AG04449 (cell line): ENCODE measurements at regions of chr16 and their contacts with region 1.

Region 1: GRCh38 chr16:30534368-30535105 is at the start of gene ZNF747:
- DNase-seq: no peak
- H3K4me3 ChIP-seq: peak within 1 kb of the TSS; percentile 70
- CTCF ChIP-seq: no peak

Region 2: DNA sequence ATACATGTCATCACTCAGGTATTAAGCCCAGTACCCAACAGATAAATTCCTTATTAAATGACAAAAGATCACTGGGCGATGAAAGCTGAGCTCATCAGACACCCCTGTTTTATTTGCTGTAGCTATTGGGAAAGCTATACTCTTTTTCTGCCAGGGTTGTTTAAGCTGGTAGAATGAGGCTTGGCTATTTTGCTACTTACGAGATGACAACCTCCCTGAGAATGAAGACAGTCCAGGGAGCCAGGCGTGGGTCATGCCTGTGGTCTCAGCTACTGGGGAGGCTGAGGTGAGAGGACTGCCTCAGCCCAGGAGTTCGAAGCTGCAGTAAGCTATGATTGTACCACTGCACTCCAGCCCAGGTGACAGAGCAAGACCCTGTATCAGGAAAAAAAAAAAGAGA is 1675.2 kb before region 1 on chr16:
- CTCF ChIA-PET with region 1: no interaction called
- POLR2A ChIA-PET with region 1: no interaction called
- DNase-seq: no peak
- H3K4me3 ChIP-seq: no peak overlapping the region
- CTCF ChIP-seq: no peak

Region 3: GRCh38 chr16:30429678-30430427 is 104.7 kb before region 1 on chr16 and contains the start of gene DCTPP1:
- CTCF ChIA-PET with region 1: interaction called, 20 read pairs
- POLR2A ChIA-PET with region 1: no interaction called
- DNase-seq: peak; percentile 91
- H3K4me3 ChIP-seq: peak within 1 kb of the TSS; percentile 94
- CTCF ChIP-seq: peak; percentile 71

Region 4: DNA sequence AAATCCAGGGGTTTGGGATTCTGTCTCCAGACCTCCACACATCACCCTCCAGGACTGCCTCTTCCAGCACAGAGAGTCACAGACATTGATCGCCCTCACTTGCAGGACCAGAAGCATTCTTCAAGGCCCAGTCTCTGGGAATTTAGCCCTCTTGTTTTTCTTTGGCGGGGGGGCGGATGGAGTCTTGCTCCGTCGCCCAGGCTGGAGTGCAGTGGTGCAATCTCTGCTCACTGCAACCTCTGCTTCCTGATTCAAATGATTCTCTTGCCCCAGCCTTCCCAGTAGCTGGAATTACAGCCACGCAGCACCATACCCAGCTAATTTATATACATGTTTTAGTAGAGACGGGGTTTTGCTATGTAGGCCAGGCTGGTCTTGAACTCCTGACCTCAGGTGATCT is 70.5 kb before region 1 on chr16:
- CTCF ChIA-PET with region 1: no interaction called
- POLR2A ChIA-PET with region 1: no interaction called
- DNase-seq: no peak
- H3K4me3 ChIP-seq: no peak overlapping the region
- CTCF ChIP-seq: no peak

Region 5: DNA sequence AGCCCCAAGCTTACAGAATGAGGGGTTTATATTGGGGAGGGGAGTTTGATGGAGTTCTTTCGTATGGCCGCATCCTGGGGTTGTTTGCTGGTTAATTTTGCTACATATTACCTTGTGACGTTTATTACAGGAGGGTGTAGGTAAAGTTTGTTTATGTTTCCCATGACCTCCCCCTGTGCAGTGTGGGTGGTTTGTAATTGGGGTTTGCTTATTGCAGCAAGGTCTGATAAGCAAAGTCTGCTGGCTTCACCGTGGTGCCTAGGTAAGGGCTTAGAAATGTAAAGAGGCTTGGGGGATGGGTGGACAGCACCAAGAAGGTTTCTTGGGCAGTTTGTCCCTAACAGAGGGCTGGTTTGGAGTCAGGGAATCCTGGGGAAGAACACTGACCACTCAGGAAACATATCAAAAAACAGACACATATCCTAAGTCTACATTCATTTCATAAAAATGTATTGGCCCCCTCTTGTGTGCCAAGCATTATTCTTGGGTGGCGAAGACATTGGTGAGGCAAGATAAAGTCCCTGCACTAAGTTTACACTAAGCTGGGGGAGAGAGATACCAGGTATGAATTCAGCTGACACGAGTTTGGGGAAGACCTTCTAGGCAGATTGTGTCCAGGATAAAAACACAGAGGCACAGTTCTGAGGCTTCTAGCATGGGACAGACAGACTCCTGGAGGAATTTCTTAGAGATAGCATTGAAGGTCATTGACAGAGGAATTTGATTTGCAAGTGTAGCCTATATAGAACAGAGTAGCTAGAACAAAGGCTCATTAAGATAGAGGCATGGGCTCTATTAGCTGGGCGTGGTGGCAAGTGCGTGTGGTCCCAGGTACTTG is 14.1 kb after region 1 on chr16:
- CTCF ChIA-PET with region 1: interaction called, 17 read pairs
- POLR2A ChIA-PET with region 1: no interaction called
- DNase-seq: no peak
- H3K4me3 ChIP-seq: no peak overlapping the region
- CTCF ChIP-seq: no peak

Region 6: DNA sequence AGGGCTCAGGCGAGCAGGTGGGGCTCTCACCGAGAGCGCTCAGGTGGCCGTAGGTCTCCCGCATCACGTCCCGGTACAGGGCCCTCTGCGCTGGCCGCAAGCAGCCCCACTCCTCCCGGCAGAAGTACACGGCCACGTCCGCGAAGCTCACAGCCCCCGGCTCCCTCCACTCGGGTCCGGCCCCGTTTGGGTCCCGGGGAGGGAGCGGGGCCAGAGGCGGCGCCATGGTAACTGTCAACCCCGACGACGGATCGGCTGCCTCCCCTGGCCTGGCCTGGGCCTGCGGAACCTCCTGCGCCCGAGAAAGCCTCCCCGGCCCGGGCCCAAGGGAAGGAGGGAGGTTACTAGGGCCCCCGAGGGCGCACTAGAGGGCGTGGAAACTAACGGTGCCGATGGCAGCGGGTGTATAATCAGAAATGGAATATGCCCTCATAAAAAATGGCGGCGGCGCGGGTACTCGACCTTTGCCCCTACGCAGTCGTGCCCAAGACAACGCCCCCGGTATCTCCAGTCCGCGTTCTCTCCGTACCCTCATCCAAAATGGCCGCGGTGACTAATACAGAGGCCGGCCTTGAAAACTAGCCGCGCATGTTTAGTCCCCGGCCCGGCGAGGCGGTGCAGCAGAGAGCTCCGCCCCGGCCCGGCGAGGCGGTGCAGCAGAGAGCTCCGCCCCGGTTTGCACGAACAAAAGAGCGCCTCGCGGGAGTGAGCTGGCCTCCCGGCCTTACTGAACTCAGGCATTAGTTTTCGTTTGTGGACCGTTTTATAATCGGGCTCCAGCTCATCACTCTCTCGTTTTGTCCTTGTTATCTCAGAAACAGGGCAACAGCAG is 23.6 kb after region 1 on chr16 and contains the start of gene ZNF764:
- CTCF ChIA-PET with region 1: interaction called, 27 read pairs
- POLR2A ChIA-PET with region 1: interaction called, 6 read pairs
- DNase-seq: peak; percentile 71
- H3K4me3 ChIP-seq: peak within 1 kb of the TSS; percentile 76
- CTCF ChIP-seq: no peak

Region 7: DNA sequence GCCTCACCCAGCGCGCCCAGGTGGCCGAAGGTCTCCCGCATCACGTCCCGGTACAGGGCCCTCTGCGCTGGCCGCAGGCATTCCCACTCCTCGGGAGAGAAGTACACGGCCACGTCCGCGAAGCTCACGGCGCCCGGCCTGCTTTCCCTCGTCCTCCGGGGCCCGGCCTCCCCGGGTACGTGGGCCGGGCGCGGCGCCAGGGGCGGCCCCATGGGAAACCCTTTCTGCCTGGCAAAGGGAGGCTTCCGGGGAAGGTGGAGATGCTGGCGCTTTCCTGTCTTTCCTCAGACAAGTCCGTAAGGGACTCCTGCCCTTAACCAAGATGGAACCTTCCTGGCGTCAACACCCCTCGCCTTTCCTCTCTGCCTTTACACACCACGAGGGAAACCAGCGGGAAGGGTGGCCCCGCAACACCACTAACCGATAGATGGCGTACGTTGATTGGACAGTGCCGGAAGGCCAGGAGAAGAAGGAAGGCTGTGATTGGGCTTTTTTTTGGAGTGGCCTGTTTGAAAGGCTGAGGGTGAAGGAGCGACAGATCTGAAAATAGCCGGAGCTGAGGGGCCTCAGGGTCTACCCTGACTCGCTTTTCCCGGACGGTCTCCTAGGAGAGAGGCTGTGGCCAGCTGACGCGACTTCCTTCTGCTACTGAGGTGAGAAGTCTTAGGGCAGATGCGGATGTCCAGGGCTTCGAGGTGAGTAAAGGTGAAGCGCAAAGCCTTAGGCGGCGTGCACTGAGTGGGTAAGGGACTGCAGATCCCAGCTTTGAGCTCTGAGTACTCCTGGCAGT is 51.1 kb after region 1 on chr16 and contains the start of gene ZNF785:
- CTCF ChIA-PET with region 1: interaction called, 10 read pairs
- POLR2A ChIA-PET with region 1: interaction called, 3 read pairs
- DNase-seq: peak; percentile 96
- H3K4me3 ChIP-seq: peak within 1 kb of the TSS; percentile 79
- CTCF ChIP-seq: peak; percentile 11